Activated CD8-positive, alpha-beta T cell treated with anti-CD3 and anti-CD28 coated beads, Interleukin-2, amount 10 ng/mL, durations not matched to agents 7 days and 5 days (primary cell): ENCODE measurements at regions of chr9 and their contacts with region 1.

Region 1: DNA sequence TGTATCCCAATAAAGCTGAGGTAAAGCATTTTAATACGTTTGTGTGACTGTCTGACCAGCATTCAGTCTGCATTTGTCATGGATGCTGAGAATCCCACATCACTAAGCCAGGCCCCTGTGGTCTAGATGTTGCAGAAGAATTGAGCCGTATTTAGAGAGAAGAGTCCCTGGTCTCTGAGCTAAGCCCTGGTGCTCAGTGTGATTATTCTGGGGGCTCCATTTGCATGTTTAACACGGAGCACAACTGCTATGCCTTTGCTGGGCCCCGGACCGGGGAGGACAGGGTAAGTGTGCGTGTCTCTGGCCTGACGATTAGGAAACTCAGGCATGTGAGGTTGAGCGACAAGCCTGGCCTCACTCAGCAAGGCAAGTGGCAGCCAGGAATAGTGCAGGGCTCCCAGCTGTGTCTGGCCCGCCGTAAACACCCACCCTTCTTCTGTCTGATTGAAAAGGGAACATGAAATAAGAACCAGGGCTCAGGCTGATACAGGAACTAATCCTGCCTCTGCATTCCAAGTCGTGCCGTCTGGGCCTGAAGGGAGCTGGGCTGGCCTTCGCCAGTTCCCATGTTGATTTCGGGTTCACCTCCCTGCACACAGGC is 22.3 kb downstream of the FAM78A start:
- DNase-seq: no peak
- ATAC-seq: no peak
- H3K4me3 Mint-ChIP-seq: peak overlapping the region; percentile 34
- H3K27ac Mint-ChIP-seq: peak overlapping the region; percentile 97
- H3K4me1 Mint-ChIP-seq: peaks cover 80% of the 10 kb centered on the region
- H3K27me3 Mint-ChIP-seq: no peaks in the 10 kb centered on the region

Region 2: GRCh38 chr9:131125128-131126058 is 128.6 kb before region 1 on chr9 and contains the start of gene NUP214:
- CTCF ChIA-PET with region 1: no interaction called
- POLR2A ChIA-PET with region 1: interaction called, 12 read pairs
- DNase-seq: peak; percentile 100
- ATAC-seq: peak; percentile 100
- H3K4me3 Mint-ChIP-seq: peak within 1 kb of the TSS; percentile 96
- H3K27ac Mint-ChIP-seq: peak within 1 kb of the TSS; percentile 97
- H3K4me1 Mint-ChIP-seq: peaks cover 27% of the 10 kb centered on the region
- H3K27me3 Mint-ChIP-seq: no peaks in the 10 kb centered on the region
- total RNA-seq, gene NUP214: 61.3 to 63.5 TPM

Region 3: DNA sequence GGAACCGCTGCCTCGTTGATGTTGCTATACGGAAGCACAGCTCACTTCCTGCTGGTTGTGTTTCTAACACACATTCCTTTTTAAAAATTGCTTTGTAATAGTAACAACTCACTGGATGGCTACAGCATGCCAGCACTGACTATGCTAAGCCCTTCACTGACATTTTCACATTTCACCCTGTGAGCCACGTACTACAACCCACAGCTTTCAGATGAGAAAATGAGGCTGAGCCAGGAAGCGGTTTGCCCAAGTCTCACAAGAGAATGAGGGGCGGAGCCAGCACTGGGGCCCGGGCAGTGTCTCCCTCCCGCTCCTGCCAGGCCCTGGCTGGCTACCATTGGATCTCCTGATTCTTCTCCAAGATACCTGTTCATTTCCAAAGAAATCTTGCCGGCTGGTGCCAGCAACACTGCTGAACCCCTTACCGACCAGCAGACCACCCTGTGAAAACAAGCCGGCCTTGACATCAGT is 16.0 kb before region 1 on chr9:
- CTCF ChIA-PET with region 1: interaction called, 12 read pairs
- POLR2A ChIA-PET with region 1: interaction called, 54 read pairs
- DNase-seq: peak; percentile 94
- ATAC-seq: peak; percentile 98
- H3K4me3 Mint-ChIP-seq: peak overlapping the region; percentile 70
- H3K27ac Mint-ChIP-seq: peak overlapping the region; percentile 96
- H3K4me1 Mint-ChIP-seq: peaks cover 52% of the 10 kb centered on the region
- H3K27me3 Mint-ChIP-seq: no peaks in the 10 kb centered on the region

Region 4: GRCh38 chr9:131277910-131278701 is 24.1 kb after region 1 on chr9:
- CTCF ChIA-PET with region 1: interaction called, 163 read pairs
- POLR2A ChIA-PET with region 1: interaction called, 330 read pairs
- DNase-seq: peak; percentile 87
- ATAC-seq: peak; percentile 50
- H3K4me3 Mint-ChIP-seq: peak overlapping the region; percentile 84
- H3K27ac Mint-ChIP-seq: peak overlapping the region; percentile 97
- H3K4me1 Mint-ChIP-seq: peaks cover 24% of the 10 kb centered on the region
- H3K27me3 Mint-ChIP-seq: peaks cover 16% of the 10 kb centered on the region